Right cardiac atrium (tissue), 5 donors: ENCODE measurements at regions of chr3 and their contacts with region 1.

Region 1: GRCh38 chr3:55897573-55898224 is 410.6 kb upstream of the WNT5A start:
- DNase-seq: no peak
- ATAC-seq: no peak
- H3K4me3 ChIP-seq: no peak overlapping the region
- H3K27ac ChIP-seq: no peak overlapping the region
- H3K4me1 ChIP-seq: no peaks in the 10 kb centered on the region
- H3K27me3 ChIP-seq: peaks cover 2% of the 10 kb centered on the region

Region 2: GRCh38 chr3:54071601-54072000 is 1826.1 kb before region 1 on chr3:
- intact Hi-C with region 1: loop called in 1 of 4 experiments (anchors 10 kb)
- DNase-seq: no peak
- ATAC-seq: no peak
- H3K4me3 ChIP-seq: no peak overlapping the region
- H3K27ac ChIP-seq: no peak overlapping the region
- H3K4me1 ChIP-seq: no peaks in the 10 kb centered on the region
- H3K27me3 ChIP-seq: no peaks in the 10 kb centered on the region

Region 3: GRCh38 chr3:56131974-56132590 is 234.4 kb after region 1 on chr3:
- intact Hi-C with region 1: no loop called
- DNase-seq: no peak
- ATAC-seq: no peak
- H3K4me3 ChIP-seq: no peak overlapping the region
- H3K27ac ChIP-seq: no peak overlapping the region
- H3K4me1 ChIP-seq: no peaks in the 10 kb centered on the region
- H3K27me3 ChIP-seq: no peaks in the 10 kb centered on the region